BJ (cell line): ENCODE measurements at regions of chr3 and their contacts with region 1.

Region 1: GRCh38 chr3:142279965-142280590 is 54.7 kb upstream of the GK5 start:
- DNase-seq: no peak
- H3K4me3 ChIP-seq: no peak overlapping the region
- H3K27me3 ChIP-seq: no peaks in the 10 kb centered on the region
- CTCF ChIP-seq: peak; percentile 59

Region 2: GRCh38 chr3:142129516-142130171 is 150.4 kb before region 1 on chr3:
- CTCF ChIA-PET with region 1: interaction called, 91 read pairs
- POLR2A ChIA-PET with region 1: interaction called, 3 read pairs
- DNase-seq: no peak
- H3K4me3 ChIP-seq: no peak overlapping the region
- H3K27me3 ChIP-seq: no peaks in the 10 kb centered on the region
- CTCF ChIP-seq: peak; percentile 28; the same call in 1 of the 2 replicates

Region 3: GRCh38 chr3:142618917-142619461 is 338.9 kb after region 1 on chr3:
- CTCF ChIA-PET with region 1: no interaction called
- POLR2A ChIA-PET with region 1: no interaction called
- DNase-seq: no peak
- H3K4me3 ChIP-seq: no peak overlapping the region
- H3K27me3 ChIP-seq: peaks cover 1% of the 10 kb centered on the region; the same call in 1 of the 2 replicates
- CTCF ChIP-seq: no peak